Activated CD4-positive, alpha-beta T cell treated with anti-CD3 and anti-CD28 coated beads, Interleukin-2, amount 10 ng/mL, durations not matched to agents 24 days and 14 days (primary cell): ENCODE measurements at regions of chr2 and their contacts with region 1.

Region 1: GRCh38 chr2:234425619-234426603 is 71.0 kb downstream of the ARL4C start:
- DNase-seq: peak; percentile 94
- H3K4me3 Mint-ChIP-seq: peak overlapping the region; percentile 84
- H3K27ac Mint-ChIP-seq: peak overlapping the region; percentile 99
- H3K4me1 Mint-ChIP-seq: peaks cover 81% of the 10 kb centered on the region
- H3K27me3 Mint-ChIP-seq: no peaks in the 10 kb centered on the region

Region 2: GRCh38 chr2:234269769-234270204 is 156.1 kb before region 1 on chr2:
- intact Hi-C with region 1: loop called (anchors 5 kb)
- DNase-seq: no peak
- H3K4me3 Mint-ChIP-seq: no peak overlapping the region
- H3K27ac Mint-ChIP-seq: peak overlapping the region; percentile 73
- H3K4me1 Mint-ChIP-seq: peaks cover 68% of the 10 kb centered on the region
- H3K27me3 Mint-ChIP-seq: no peaks in the 10 kb centered on the region

Region 3: DNA sequence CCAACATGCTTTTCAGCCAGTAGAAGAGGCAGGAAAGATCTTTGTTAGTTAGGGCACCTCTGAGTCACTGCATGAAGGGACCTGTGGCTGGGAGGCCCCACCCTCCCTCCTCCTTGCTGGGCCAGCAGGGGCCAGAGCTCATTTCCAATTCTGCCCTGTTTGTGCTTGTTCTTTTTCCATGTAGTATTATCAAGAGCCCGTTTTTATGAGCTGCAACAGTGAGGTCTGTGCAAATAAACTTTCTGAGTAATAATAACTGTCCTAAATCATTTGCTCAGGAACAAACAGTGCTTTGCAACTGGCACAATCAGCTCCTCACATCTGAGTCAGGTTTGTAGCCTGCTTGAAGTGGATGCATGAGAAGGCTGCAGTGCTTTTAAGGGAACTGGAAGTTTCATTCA is 57.0 kb before region 1 on chr2:
- intact Hi-C with region 1: loop called (anchors 2 kb)
- DNase-seq: peak; percentile 85
- H3K4me3 Mint-ChIP-seq: peak overlapping the region; percentile 10
- H3K27ac Mint-ChIP-seq: peak overlapping the region; percentile 69
- H3K4me1 Mint-ChIP-seq: peaks cover 69% of the 10 kb centered on the region
- H3K27me3 Mint-ChIP-seq: no peaks in the 10 kb centered on the region

Region 4: GRCh38 chr2:234399451-234400246 is 26.3 kb before region 1 on chr2:
- intact Hi-C with region 1: loop called (anchors 2 kb)
- DNase-seq: no peak
- H3K4me3 Mint-ChIP-seq: no peak overlapping the region
- H3K27ac Mint-ChIP-seq: peak overlapping the region; percentile 62
- H3K4me1 Mint-ChIP-seq: peaks cover 41% of the 10 kb centered on the region
- H3K27me3 Mint-ChIP-seq: no peaks in the 10 kb centered on the region

Region 5: DNA sequence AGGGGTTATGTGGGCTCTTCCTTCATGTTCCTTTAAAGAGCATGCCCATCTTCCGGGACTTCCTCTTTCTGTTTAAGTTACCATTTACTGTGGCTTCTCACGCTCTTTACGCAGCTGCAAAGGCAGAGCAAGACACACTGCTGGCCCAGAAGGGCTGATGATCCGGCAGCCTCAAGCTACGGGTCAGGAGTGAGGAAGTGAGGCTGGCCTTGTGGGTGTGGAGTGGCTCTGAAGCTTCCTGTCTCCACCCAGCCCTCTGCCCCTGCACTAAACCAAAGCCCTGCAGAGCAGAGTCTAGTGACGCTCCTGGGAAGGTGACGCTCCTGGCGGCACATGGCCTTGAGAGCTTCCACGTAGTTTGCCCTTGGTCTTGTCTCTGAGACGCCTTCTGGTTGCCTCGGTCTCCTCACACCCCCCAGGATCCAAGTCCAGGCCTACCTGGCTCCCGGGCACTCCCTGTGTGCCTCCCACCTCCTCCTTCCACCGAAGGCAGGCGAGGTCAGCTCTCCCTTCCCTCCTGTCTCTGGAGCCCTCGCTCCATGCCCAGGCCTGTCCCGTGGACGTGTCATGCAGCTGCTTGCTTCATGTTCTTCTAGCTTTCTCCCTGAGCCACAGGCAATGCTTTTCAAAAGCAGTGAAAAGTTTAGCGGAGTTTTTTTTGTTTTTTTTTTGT is 20.6 kb after region 1 on chr2:
- intact Hi-C with region 1: loop called (anchors 1 kb)
- DNase-seq: peak; percentile 96
- H3K4me3 Mint-ChIP-seq: peak overlapping the region; percentile 85
- H3K27ac Mint-ChIP-seq: peak overlapping the region; percentile 100
- H3K4me1 Mint-ChIP-seq: peaks cover 80% of the 10 kb centered on the region
- H3K27me3 Mint-ChIP-seq: no peaks in the 10 kb centered on the region

Region 6: GRCh38 chr2:234457421-234457820 is 31.5 kb after region 1 on chr2:
- intact Hi-C with region 1: no loop called
- DNase-seq: no peak
- H3K4me3 Mint-ChIP-seq: no peak overlapping the region
- H3K27ac Mint-ChIP-seq: no peak overlapping the region
- H3K4me1 Mint-ChIP-seq: peaks cover 59% of the 10 kb centered on the region
- H3K27me3 Mint-ChIP-seq: no peaks in the 10 kb centered on the region

Region 7: GRCh38 chr2:234488913-234489451 is 63.1 kb after region 1 on chr2:
- intact Hi-C with region 1: loop called (anchors 1 kb)
- DNase-seq: peak; percentile 94
- H3K4me3 Mint-ChIP-seq: peak overlapping the region; percentile 90
- H3K27ac Mint-ChIP-seq: peak overlapping the region; percentile 97
- H3K4me1 Mint-ChIP-seq: peaks cover 84% of the 10 kb centered on the region
- H3K27me3 Mint-ChIP-seq: no peaks in the 10 kb centered on the region

Region 8: GRCh38 chr2:234841321-234842015 is 415.6 kb after region 1 on chr2:
- intact Hi-C with region 1: no loop called
- DNase-seq: no peak
- H3K4me3 Mint-ChIP-seq: no peak overlapping the region
- H3K27ac Mint-ChIP-seq: no peak overlapping the region
- H3K4me1 Mint-ChIP-seq: no peaks in the 10 kb centered on the region
- H3K27me3 Mint-ChIP-seq: no peaks in the 10 kb centered on the region